SK-N-SH (cell line): ENCODE measurements at regions of chr12 and their contacts with region 1.

Region 1: DNA sequence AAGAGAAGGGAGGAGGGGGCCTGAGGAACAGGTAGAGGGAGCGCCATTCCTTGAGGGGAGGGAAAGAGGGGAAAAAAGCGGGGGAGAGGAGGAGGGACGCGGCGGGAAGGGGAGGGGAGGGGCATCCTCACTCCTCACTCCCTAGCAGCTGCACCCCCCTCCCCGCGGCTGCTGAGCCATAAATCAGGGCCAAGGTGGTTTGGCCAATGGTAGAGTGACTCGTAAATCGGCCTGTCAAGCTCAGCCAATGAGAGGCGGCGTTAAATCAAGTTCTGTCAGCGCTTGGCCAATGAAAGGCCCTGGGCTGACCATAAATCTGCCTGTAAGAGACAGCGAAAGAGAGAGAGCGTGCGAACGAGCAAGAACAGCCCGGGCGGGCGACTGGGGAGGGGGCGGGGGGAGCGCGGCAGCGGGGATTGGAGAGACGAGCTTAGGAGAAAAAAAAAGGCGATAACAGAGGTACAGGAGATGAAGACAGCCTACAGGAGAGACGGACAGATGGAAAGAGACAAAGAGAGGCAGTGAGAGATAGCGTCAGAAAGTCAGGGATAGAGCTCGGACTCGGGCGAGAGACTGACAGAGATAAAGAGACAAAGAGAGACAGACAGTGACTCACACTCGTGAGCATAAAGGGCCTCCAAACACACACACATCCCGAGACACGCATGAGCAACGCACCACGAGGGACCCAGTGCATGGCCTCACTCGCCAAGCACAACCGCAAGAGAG is 5.1 kb downstream of the GPR84 start:
- DNase-seq: peak; percentile 91
- H3K4me3 ChIP-seq: peak overlapping the region; percentile 55 to 76
- H3K27ac ChIP-seq: peak overlapping the region; percentile 79 to 99
- H3K4me1 ChIP-seq: peaks cover 27 to 47% of the 10 kb centered on the region in 2 experiments
- H3K27me3 ChIP-seq: no peaks in the 10 kb centered on the region
- CTCF ChIP-seq: no peak
- EP300 ChIP-seq: peak; percentile 68 to 89; a peak in 3 of 4 replicates
- RAD21 ChIP-seq: no peak

Region 2: DNA sequence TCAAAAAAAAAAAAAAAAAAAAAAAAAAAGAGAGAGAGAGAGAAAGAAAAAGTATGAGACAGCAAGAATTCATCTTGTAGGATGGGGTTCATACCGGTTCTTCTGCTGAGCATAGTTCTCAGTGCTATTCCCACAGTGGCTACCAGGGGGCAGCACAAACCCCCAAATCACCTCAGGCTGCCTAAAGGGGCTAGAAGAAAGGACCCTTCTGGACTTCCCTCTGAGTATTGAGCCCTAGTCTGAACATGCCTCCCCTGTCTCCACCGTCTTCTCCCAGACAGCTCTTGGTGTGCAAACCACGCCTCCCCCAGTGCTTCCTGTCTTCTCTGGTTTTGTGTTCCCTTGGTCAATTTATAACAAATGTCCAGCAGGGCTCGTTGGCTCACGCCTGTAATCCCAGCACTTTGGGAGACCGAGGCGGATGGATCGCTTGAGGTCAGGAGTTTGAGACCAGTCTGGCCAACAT is 139.1 kb before region 1 on chr12:
- CTCF ChIA-PET with region 1: interaction called, 63 read pairs
- POLR2A ChIA-PET with region 1: interaction called, 3 read pairs
- DNase-seq: peak; percentile 75
- H3K4me3 ChIP-seq: no peak overlapping the region; a peak in 1 of 4 replicates
- H3K27ac ChIP-seq: no peak overlapping the region
- H3K4me1 ChIP-seq: peaks cover 3 to 14% of the 10 kb centered on the region in 2 experiments; a peak in 3 of 4 replicates
- H3K27me3 ChIP-seq: no peaks in the 10 kb centered on the region
- CTCF ChIP-seq: peak; percentile 88
- EP300 ChIP-seq: no peak
- RAD21 ChIP-seq: peak; percentile 84

Region 3: GRCh38 chr12:54251667-54252284 is 107.4 kb before region 1 on chr12:
- CTCF ChIA-PET with region 1: interaction called, 15 read pairs
- POLR2A ChIA-PET with region 1: interaction called, 3 read pairs
- DNase-seq: peak; percentile 73
- H3K4me3 ChIP-seq: no peak overlapping the region
- H3K27ac ChIP-seq: peak overlapping the region in 1 of 2 experiments; percentile 43; a peak in 2 of 4 replicates
- H3K4me1 ChIP-seq: peaks cover 0 to 4% of the 10 kb centered on the region in 2 experiments; a peak in 2 of 4 replicates
- H3K27me3 ChIP-seq: no peaks in the 10 kb centered on the region
- CTCF ChIP-seq: peak; percentile 87
- EP300 ChIP-seq: no peak
- RAD21 ChIP-seq: peak; percentile 78

Region 4: GRCh38 chr12:54285150-54286041 is 73.8 kb before region 1 on chr12:
- CTCF ChIA-PET with region 1: interaction called, 86 read pairs
- POLR2A ChIA-PET with region 1: interaction called, 20 read pairs
- DNase-seq: no peak
- H3K4me3 ChIP-seq: peak overlapping the region; percentile 24 to 80; a peak in 3 of 4 replicates
- H3K27ac ChIP-seq: peak overlapping the region; percentile 21 to 36; a peak in 3 of 4 replicates
- H3K4me1 ChIP-seq: peaks cover 13 to 25% of the 10 kb centered on the region in 2 experiments; a peak in 3 of 4 replicates
- H3K27me3 ChIP-seq: no peaks in the 10 kb centered on the region
- CTCF ChIP-seq: peak; percentile 54
- EP300 ChIP-seq: no peak
- RAD21 ChIP-seq: peak; percentile 17; the same call in 1 of the 2 replicates

Region 5: GRCh38 chr12:54300732-54301427 is 58.3 kb before region 1 on chr12 and contains the start of gene NFE2:
- CTCF ChIA-PET with region 1: interaction called, 86 read pairs
- POLR2A ChIA-PET with region 1: no interaction called
- DNase-seq: peak; percentile 49
- H3K4me3 ChIP-seq: peak within 1 kb of the TSS in 1 of 2 experiments; percentile 14; a peak in 1 of 4 replicates
- H3K27ac ChIP-seq: no peak within 1 kb of the TSS
- H3K4me1 ChIP-seq: peaks cover 0 to 10% of the 10 kb centered on the region in 2 experiments; a peak in 1 of 4 replicates
- H3K27me3 ChIP-seq: no peaks in the 10 kb centered on the region; the same call in 1 of the 2 replicates
- CTCF ChIP-seq: no peak
- EP300 ChIP-seq: no peak
- RAD21 ChIP-seq: no peak
- polyA plus RNA-seq, gene NFE2: 0.16 and 0.25 TPM in 2 replicates